ENCODE measurements at regions of chr7 and their contacts with region 1.

Region 1: DNA sequence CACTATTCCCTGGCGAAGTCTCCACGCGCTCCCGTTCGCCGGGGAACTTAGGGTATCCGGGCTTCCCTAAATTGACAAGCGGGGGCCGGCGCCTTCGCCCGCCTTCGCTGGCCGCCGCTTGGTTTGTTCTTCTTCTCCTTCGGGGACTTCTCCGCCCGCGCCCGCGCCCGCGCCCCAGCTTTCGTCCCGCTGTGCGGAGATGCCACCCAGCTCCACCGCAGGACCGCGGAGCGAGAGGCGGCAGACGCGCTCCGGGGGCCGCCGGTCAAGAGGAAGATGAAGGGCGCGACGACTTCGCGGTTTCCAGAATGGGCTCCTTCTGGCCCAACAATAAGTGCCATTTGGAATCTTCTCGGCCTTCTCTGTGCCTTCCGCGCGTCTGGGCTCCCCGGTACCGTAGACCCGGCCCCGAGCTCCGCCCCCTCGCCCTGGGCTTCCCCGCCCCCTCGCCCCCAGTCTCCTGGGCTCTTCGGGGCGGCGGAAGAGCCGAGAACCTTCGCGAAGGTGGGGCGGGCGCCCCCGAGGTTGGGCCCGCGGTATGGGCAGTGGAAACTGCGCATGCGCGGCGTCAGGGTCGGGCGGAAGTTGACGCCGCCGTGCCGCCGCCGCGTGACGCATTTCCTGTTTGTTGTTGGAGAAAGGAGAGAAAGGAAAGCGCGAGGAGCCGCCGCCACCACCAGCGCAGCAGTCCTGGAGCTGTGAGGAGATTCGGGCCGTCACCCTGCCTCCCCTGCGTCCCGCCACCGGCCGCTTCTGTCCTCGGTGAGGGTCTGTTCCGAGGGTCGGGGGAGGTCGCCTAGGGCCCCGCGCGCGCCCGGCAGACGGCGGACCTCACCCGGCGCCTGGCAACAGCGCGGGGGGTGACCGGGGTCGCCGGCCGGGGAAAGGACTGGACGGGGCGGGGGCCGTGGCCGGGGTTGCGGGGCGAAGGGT is at the start of gene DNAJB6:
- DNase-seq: peak; percentile 93 to 98 (median 97)
- ATAC-seq: peak; percentile 91
- H3K4me3 ChIP-seq: peak within 1 kb of the TSS; percentile 91
- H3K4me3 Mint-ChIP-seq: peak within 1 kb of the TSS; percentile 94 to 99 (median 97)
- H3K27ac ChIP-seq: peak within 1 kb of the TSS; percentile 83
- H3K27ac Mint-ChIP-seq: peak within 1 kb of the TSS; percentile 96 to 99 (median 98)
- H3K4me1 ChIP-seq: peaks cover 24 to 27% of the 10 kb centered on the region in 2 donors
- H3K4me1 Mint-ChIP-seq: peaks cover 26 to 45% (median 38%) of the 10 kb centered on the region in 7 donors
- H3K27me3 ChIP-seq: no peaks in the 10 kb centered on the region
- H3K27me3 Mint-ChIP-seq: peaks cover 0 to 26% (median 4%) of the 10 kb centered on the region in 5 donors
- total RNA-seq, gene DNAJB6: 79.8 to 219 (median 96.0) TPM

Region 2: GRCh38 chr7:156640257-156640948 is 696.2 kb before region 1 on chr7 and contains the start of gene RNF32:
- CTCF ChIA-PET with region 1: no interaction called
- POLR2A ChIA-PET with region 1: no interaction called
- intact Hi-C with region 1: loop called in 1 of 2 experiments (anchors 2 kb)
- DNase-seq: peak; percentile 72 to 100 (median 81)
- ATAC-seq: peak; percentile 88
- H3K4me3 ChIP-seq: peak within 1 kb of the TSS; percentile 77
- H3K4me3 Mint-ChIP-seq: peak within 1 kb of the TSS; percentile 78 to 98 (median 87)
- H3K27ac ChIP-seq: peak within 1 kb of the TSS; percentile 67
- H3K27ac Mint-ChIP-seq: peak within 1 kb of the TSS in 8 of 9 donors; percentile 50 to 100 (median 84)
- H3K4me1 ChIP-seq: peaks cover 6% of the 10 kb centered on the region in 2 donors
- H3K4me1 Mint-ChIP-seq: peaks cover 7 to 48% (median 17%) of the 10 kb centered on the region in 7 donors
- H3K27me3 ChIP-seq: no peaks in the 10 kb centered on the region
- H3K27me3 Mint-ChIP-seq: peaks cover 12 to 65% (median 42%) of the 10 kb centered on the region in 5 donors
- total RNA-seq, gene RNF32: 0.81 to 2.1 (median 0.99) TPM in 4 of 5 experiments, not detected in the other

Region 3: GRCh38 chr7:156969972-156970420 is 366.7 kb before region 1 on chr7:
- CTCF ChIA-PET with region 1: no interaction called
- POLR2A ChIA-PET with region 1: no interaction called
- intact Hi-C with region 1: loop called in 1 of 2 experiments (anchors 1 kb)
- DNase-seq: peak in 4 of 9 donors; percentile 11 to 26 (median 16)
- ATAC-seq: peak; percentile 52
- H3K4me3 ChIP-seq: no peak overlapping the region
- H3K4me3 Mint-ChIP-seq: no peak overlapping the region
- H3K27ac ChIP-seq: no peak overlapping the region
- H3K27ac Mint-ChIP-seq: peak overlapping the region in 1 of 9 donors; percentile 59
- H3K4me1 ChIP-seq: no peaks in the 10 kb centered on the region
- H3K4me1 Mint-ChIP-seq: no peaks in the 10 kb centered on the region
- H3K27me3 ChIP-seq: no peaks in the 10 kb centered on the region
- H3K27me3 Mint-ChIP-seq: no peaks in the 10 kb centered on the region

Region 4: DNA sequence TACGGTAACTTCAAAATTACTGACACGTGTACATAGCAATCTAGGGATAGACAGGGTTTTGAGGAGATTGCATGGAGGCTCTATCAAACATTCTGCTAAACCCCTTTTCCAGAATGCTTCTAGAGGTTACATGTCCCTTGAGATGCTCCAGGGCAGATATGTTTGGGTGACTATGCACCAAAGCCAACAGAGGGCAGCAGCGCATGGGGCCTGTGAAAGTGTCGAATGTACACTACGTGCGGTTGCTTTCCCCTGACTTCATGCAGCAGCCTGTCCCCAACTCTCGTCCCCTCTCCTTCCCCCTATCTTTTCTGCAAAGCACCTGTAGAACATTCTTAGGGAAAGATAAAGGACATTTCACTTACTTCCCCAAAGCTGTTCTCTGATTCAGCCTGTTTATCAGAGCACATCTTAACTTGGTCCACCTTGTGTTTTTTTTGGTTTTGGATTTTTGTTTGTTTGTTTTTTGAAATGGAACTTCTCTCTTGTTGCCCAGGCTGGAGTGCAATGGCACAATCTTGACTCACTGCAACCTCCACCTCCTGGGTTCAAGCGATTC is 107.7 kb before region 1 on chr7:
- CTCF ChIA-PET with region 1: no interaction called
- POLR2A ChIA-PET with region 1: no interaction called
- intact Hi-C with region 1: loop called (anchors 1 kb)
- DNase-seq: peak in 5 of 9 donors; percentile 9 to 28 (median 15)
- ATAC-seq: peak; percentile 53
- H3K4me3 ChIP-seq: no peak overlapping the region
- H3K4me3 Mint-ChIP-seq: no peak overlapping the region
- H3K27ac ChIP-seq: no peak overlapping the region
- H3K27ac Mint-ChIP-seq: no peak overlapping the region
- H3K4me1 ChIP-seq: no peaks in the 10 kb centered on the region
- H3K4me1 Mint-ChIP-seq: peaks cover 0 to 4% (median under 1%) of the 10 kb centered on the region in 7 donors
- H3K27me3 ChIP-seq: no peaks in the 10 kb centered on the region
- H3K27me3 Mint-ChIP-seq: no peaks in the 10 kb centered on the region

Region 5: GRCh38 chr7:157273208-157274093 is 63.2 kb before region 1 on chr7:
- CTCF ChIA-PET with region 1: no interaction called
- POLR2A ChIA-PET with region 1: no interaction called
- intact Hi-C with region 1: loop called (anchors 1 to 2 kb)
- DNase-seq: peak; percentile 17 to 66 (median 50)
- ATAC-seq: peak; percentile 84
- H3K4me3 ChIP-seq: no peak overlapping the region
- H3K4me3 Mint-ChIP-seq: peak overlapping the region in 1 of 10 donors; percentile 25
- H3K27ac ChIP-seq: no peak overlapping the region
- H3K27ac Mint-ChIP-seq: peak overlapping the region in 5 of 9 donors; percentile 16 to 81 (median 69)
- H3K4me1 ChIP-seq: peaks cover 6 to 14% of the 10 kb centered on the region in 2 donors
- H3K4me1 Mint-ChIP-seq: peaks cover 0 to 25% (median 13%) of the 10 kb centered on the region in 7 donors
- H3K27me3 ChIP-seq: no peaks in the 10 kb centered on the region
- H3K27me3 Mint-ChIP-seq: peaks cover 0 to 4% (median 0%) of the 10 kb centered on the region in 5 donors

Region 6: DNA sequence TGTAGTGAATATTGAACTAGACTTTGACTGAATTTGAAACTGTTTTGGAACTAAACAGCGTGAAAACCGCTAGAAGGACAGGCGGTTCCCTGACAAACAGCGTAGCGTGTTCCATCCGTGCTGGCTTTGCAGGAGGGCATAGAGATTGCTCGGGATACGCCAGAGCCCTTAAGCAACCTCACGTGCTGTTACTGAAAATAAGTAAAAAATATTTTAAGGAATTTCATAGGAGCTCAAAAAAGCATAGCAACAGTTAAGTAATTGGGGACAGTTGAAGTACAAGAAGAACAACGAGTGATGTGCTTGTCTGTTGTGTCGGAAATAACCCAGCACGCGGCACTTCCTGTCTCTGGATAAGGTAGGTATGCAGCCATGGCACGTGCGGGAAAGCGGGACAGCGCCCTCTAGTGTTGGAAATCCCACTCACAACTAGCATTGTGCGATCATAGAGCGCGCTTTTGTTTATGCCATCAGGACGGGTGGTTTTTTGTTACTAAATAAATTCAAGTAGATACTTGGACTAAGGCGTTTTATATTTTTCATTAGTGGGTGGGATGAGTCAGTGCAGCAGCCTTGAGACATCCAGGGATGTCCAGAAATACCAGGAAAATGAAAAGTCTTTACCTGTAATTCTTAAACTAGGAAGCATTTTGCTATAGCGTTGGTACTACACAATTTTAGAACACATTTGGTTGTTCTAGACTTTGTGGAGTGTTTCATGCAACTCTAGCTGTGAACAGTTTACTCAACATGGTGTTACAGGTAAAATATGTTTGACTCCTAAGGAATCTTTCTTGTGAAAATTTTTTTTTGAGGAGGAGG is 50.5 kb after region 1 on chr7:
- CTCF ChIA-PET with region 1: interaction called, 3 read pairs
- POLR2A ChIA-PET with region 1: interaction called, 5 read pairs
- intact Hi-C with region 1: loop called (anchors 1 to 2 kb)
- DNase-seq: peak; percentile 67 to 90 (median 87)
- ATAC-seq: peak; percentile 96
- H3K4me3 ChIP-seq: no peak overlapping the region
- H3K4me3 Mint-ChIP-seq: peak overlapping the region in 7 of 10 donors; percentile 5 to 56 (median 21)
- H3K27ac ChIP-seq: peak overlapping the region; percentile 64
- H3K27ac Mint-ChIP-seq: peak overlapping the region; percentile 48 to 87 (median 72)
- H3K4me1 ChIP-seq: peaks cover 17 to 20% of the 10 kb centered on the region in 2 donors
- H3K4me1 Mint-ChIP-seq: peaks cover 26 to 52% (median 39%) of the 10 kb centered on the region in 7 donors
- H3K27me3 ChIP-seq: no peaks in the 10 kb centered on the region
- H3K27me3 Mint-ChIP-seq: no peaks in the 10 kb centered on the region

Region 7: DNA sequence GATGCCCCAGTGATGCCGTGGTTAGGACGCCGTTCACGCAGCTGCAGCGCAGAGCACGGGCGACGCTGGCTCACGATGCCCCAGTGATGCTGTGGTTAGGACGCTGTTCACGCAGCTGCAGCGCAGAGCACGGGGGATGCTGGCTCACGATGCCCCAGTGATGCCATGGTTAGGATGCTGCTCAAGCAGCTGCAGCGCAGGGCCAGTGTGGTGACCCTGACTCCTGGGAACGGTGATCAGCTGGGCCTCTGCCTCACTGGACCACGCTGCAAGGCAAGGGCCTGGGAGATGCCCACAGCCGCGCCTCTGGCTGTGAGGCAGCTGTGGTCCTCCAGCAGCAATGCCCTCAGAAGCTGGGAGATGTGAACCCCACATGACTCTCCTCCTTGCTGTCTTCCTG is 280.8 kb after region 1 on chr7:
- CTCF ChIA-PET with region 1: no interaction called
- POLR2A ChIA-PET with region 1: no interaction called
- intact Hi-C with region 1: no loop called
- DNase-seq: no peak
- ATAC-seq: no peak
- H3K4me3 ChIP-seq: no peak overlapping the region
- H3K4me3 Mint-ChIP-seq: no peak overlapping the region
- H3K27ac ChIP-seq: no peak overlapping the region
- H3K27ac Mint-ChIP-seq: peak overlapping the region in 4 of 9 donors; percentile 7 to 61 (median 42)
- H3K4me1 ChIP-seq: peaks cover 0 to 14% of the 10 kb centered on the region in 2 donors
- H3K4me1 Mint-ChIP-seq: peaks cover 10 to 45% (median 21%) of the 10 kb centered on the region in 7 donors
- H3K27me3 ChIP-seq: no peaks in the 10 kb centered on the region
- H3K27me3 Mint-ChIP-seq: peaks cover 0 to 7% (median 0%) of the 10 kb centered on the region in 5 donors

Measured in naive thymus-derived CD4-positive, alpha-beta T cell (primary cell).